MCF 10A (cell line): ENCODE measurements at regions of chr19 and their contacts with region 1.

Region 1: GRCh38 chr19:44954824-44955586 is at the start of gene CLPTM1:
- DNase-seq: peak; percentile 97
- H3K4me3 Mint-ChIP-seq: peak within 1 kb of the TSS; percentile 89
- H3K27ac Mint-ChIP-seq: peak within 1 kb of the TSS; percentile 96
- H3K4me1 Mint-ChIP-seq: peaks cover 29% of the 10 kb centered on the region
- H3K27me3 Mint-ChIP-seq: no peaks in the 10 kb centered on the region
- CTCF ChIP-seq: no peak
- total RNA-seq, gene CLPTM1: 91.3 and 101 TPM in 2 replicates

Region 2: GRCh38 chr19:44207126-44207803 is 747.7 kb before region 1 on chr19:
- CTCF ChIA-PET with region 1: no interaction called
- POLR2A ChIA-PET with region 1: no interaction called
- intact Hi-C with region 1: no loop called
- DNase-seq: peak; percentile 98
- H3K4me3 Mint-ChIP-seq: peak overlapping the region; percentile 99
- H3K27ac Mint-ChIP-seq: peak overlapping the region; percentile 99
- H3K4me1 Mint-ChIP-seq: peaks cover 13% of the 10 kb centered on the region
- H3K27me3 Mint-ChIP-seq: no peaks in the 10 kb centered on the region
- CTCF ChIP-seq: no peak

Region 3: GRCh38 chr19:44890366-44891015 is 64.5 kb before region 1 on chr19:
- CTCF ChIA-PET with region 1: interaction called, 6 read pairs
- POLR2A ChIA-PET with region 1: interaction called, 16 read pairs
- intact Hi-C with region 1: no loop called
- DNase-seq: peak; percentile 100
- H3K4me3 Mint-ChIP-seq: peak overlapping the region; percentile 74
- H3K27ac Mint-ChIP-seq: peak overlapping the region; percentile 70
- H3K4me1 Mint-ChIP-seq: peaks cover 25% of the 10 kb centered on the region
- H3K27me3 Mint-ChIP-seq: no peaks in the 10 kb centered on the region
- CTCF ChIP-seq: no peak

Region 4: DNA sequence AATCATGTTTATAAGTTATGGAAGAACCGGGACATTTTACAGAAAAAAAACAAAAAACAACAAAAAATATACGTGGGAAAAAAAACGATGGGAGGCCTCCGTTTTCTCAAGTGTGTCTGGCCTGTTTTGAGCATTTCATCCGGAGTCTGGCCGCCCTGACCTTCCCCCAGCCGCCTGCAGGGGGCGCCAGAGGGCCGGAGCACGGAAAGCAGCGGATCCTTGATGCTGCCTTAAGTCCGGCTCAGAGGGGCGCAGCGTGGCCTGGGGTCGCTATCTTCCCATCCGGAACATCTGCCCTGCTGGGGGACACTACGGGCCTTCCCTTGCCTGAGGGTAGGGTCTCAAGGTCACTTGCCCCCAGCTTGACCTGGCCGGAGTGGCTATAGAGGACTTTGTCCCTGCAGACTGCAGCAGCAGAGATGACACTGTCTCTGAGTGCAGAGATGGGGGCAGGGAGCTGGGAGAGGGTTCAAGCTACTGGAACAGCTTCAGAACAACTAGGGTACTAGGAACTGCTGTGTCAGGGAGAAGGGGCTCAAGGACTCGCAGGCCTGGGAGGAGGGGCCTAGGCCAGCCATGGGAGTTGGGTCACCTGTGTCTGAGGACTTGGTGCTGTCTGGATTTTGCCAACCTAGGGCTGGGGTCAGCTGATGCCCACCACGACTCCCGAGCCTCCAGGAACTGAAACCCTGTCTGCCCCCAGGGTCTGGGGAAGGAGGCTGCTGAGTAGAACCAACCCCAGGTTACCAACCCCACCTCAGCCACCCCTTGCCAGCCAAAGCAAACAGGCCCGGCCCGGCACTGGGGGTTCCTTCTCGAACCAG is 51.2 kb before region 1 on chr19:
- CTCF ChIA-PET with region 1: interaction called, 49 read pairs
- POLR2A ChIA-PET with region 1: interaction called, 4 read pairs
- intact Hi-C with region 1: loop called (anchors 1 kb)
- DNase-seq: peak; percentile 63
- H3K4me3 Mint-ChIP-seq: no peak overlapping the region
- H3K27ac Mint-ChIP-seq: no peak overlapping the region
- H3K4me1 Mint-ChIP-seq: peaks cover 7% of the 10 kb centered on the region
- H3K27me3 Mint-ChIP-seq: peaks cover 10% of the 10 kb centered on the region
- CTCF ChIP-seq: peak; percentile 97

Region 5: GRCh38 chr19:44912854-44913253 is 42.2 kb before region 1 on chr19:
- CTCF ChIA-PET with region 1: interaction called, 46 read pairs
- POLR2A ChIA-PET with region 1: interaction called, 12 read pairs
- intact Hi-C with region 1: loop called (anchors 2 kb)
- DNase-seq: no peak
- H3K4me3 Mint-ChIP-seq: no peak overlapping the region
- H3K27ac Mint-ChIP-seq: no peak overlapping the region
- H3K4me1 Mint-ChIP-seq: peaks cover 25% of the 10 kb centered on the region
- H3K27me3 Mint-ChIP-seq: no peaks in the 10 kb centered on the region
- CTCF ChIP-seq: no peak

Region 6: GRCh38 chr19:45008552-45008951 is 53.5 kb after region 1 on chr19:
- CTCF ChIA-PET with region 1: no interaction called
- POLR2A ChIA-PET with region 1: no interaction called
- intact Hi-C with region 1: no loop called
- DNase-seq: no peak
- H3K4me3 Mint-ChIP-seq: no peak overlapping the region
- H3K27ac Mint-ChIP-seq: no peak overlapping the region
- H3K4me1 Mint-ChIP-seq: no peaks in the 10 kb centered on the region
- H3K27me3 Mint-ChIP-seq: no peaks in the 10 kb centered on the region
- CTCF ChIP-seq: no peak